Activated T-helper 2 cell treated with anti-CD3 and anti-CD28 coated beads, Interferon-gamma antibody, Interleukin-2, Interleukin-4, amounts not matched to agents 10 μg/mL and 5 μg/mL and 100 μg/mL, durations not matched to agents 14 hours and 24 hours and 36 hours (primary cell): ENCODE measurements at regions of chrX and their contacts with region 1.

Region 1: DNA sequence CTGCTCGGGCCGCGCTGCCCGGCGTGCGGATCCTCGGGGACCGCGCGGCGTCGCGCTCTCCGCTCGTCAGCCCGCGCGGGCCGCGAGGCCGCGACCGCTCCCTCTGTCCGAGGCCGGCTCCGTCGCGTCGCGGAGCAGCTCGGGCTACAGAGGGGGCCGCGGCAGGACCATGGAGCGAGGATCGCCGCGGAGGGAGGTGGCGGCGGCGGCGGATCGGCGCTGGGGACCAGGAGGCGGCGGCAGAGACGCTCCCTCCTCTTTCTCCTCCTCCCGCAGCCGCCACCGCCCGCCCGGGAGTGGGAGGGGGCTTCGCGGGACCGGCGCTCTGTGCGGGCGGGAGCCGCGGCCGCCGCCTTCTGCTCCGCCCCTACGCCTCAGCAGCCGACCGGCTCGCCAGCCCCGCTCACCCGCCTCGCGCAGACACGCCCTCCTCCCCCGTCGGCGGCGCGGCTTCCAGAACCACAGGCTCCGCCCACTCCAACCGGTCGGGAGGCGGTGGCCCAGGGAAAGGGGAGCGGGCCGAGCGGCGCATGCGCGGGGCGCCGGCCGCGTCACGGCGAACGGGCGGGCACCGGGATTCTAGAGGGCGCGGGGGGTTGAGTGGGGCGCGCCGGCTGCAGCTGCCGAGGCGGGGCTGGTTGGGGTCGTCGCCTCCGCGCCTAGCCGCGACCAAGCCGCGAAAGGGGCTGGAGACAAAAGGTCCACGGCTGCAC is at the start of gene CASK:
- DNase-seq: peak; percentile 86
- H3K4me3 Mint-ChIP-seq: peak within 1 kb of the TSS; percentile 88
- H3K27ac Mint-ChIP-seq: peak within 1 kb of the TSS; percentile 87
- H3K4me1 Mint-ChIP-seq: peaks cover 36% of the 10 kb centered on the region
- H3K27me3 Mint-ChIP-seq: no peaks in the 10 kb centered on the region
- total RNA-seq, gene CASK: 18.6 and 19.4 TPM in 2 replicates

Region 2: GRCh38 chrX:41684138-41684537 is 239.3 kb before region 1 on chrX:
- intact Hi-C with region 1: no loop called
- DNase-seq: no peak
- H3K4me3 Mint-ChIP-seq: no peak overlapping the region
- H3K27ac Mint-ChIP-seq: no peak overlapping the region
- H3K4me1 Mint-ChIP-seq: peaks cover 21% of the 10 kb centered on the region
- H3K27me3 Mint-ChIP-seq: no peaks in the 10 kb centered on the region

Region 3: DNA sequence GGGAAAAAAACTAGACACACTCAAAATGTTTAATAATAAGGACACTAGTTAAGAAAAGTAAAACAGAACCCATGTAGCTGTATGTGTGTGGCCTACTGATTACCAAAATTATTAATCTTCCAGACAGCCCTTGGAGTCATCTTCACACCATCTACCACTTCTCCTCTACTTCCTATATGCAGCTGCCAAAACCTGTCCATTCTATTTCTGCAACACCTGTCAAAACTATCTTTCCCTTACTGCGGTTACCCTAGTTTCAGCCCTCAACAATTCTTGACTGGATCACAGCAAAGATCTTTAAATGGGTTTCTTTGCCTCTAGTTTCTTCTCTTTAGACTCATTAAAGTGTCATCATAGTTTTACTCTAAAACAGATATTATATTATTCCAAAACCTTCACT is 126.8 kb before region 1 on chrX:
- intact Hi-C with region 1: loop called (anchors 5 kb)
- DNase-seq: no peak
- H3K4me3 Mint-ChIP-seq: no peak overlapping the region
- H3K27ac Mint-ChIP-seq: no peak overlapping the region
- H3K4me1 Mint-ChIP-seq: peaks cover 17% of the 10 kb centered on the region
- H3K27me3 Mint-ChIP-seq: no peaks in the 10 kb centered on the region

Region 4: GRCh38 chrX:41909068-41909467 is 14.3 kb before region 1 on chrX:
- intact Hi-C with region 1: loop called (anchors 2 kb)
- DNase-seq: no peak
- H3K4me3 Mint-ChIP-seq: no peak overlapping the region
- H3K27ac Mint-ChIP-seq: peak overlapping the region; percentile 49
- H3K4me1 Mint-ChIP-seq: peaks cover 24% of the 10 kb centered on the region
- H3K27me3 Mint-ChIP-seq: no peaks in the 10 kb centered on the region

Region 5: GRCh38 chrX:42000836-42001235 is 77.4 kb after region 1 on chrX:
- intact Hi-C with region 1: no loop called
- DNase-seq: no peak
- H3K4me3 Mint-ChIP-seq: no peak overlapping the region
- H3K27ac Mint-ChIP-seq: no peak overlapping the region
- H3K4me1 Mint-ChIP-seq: no peaks in the 10 kb centered on the region
- H3K27me3 Mint-ChIP-seq: peaks cover 5% of the 10 kb centered on the region

Region 6: DNA sequence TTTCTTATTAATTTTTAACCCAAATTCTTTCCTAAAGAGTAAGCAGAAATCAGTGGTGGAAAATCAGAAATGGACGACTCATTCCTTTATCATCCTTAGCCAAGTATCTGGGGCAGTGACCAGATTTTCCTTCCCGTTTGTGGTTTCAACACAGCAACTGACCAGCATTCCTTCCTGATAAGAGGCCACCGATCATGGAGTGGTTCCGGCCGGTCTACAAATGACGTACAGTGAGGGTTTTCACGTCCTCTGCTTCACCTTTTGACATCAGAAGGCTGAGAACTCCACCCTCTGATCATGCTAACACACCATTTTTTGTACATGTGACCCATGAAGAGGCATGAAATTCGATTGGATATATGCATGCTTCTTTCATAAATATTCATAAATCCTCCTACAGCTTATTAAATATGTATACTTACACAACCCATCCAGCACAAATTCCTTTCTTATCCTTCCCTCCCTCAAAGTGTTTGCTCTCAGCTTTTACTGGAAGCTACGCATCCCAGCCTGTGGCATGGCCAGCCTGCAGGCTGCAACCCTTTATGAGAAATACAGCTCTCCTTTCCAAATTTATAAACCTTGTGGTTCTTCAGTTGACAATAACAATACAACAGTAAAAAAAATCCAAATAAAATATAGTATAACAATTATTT is 173.0 kb after region 1 on chrX:
- intact Hi-C with region 1: loop called (anchors 5 kb)
- DNase-seq: no peak
- H3K4me3 Mint-ChIP-seq: no peak overlapping the region
- H3K27ac Mint-ChIP-seq: no peak overlapping the region
- H3K4me1 Mint-ChIP-seq: peaks cover 6% of the 10 kb centered on the region
- H3K27me3 Mint-ChIP-seq: no peaks in the 10 kb centered on the region

Region 7: GRCh38 chrX:42375086-42375485 is 451.7 kb after region 1 on chrX:
- intact Hi-C with region 1: no loop called
- DNase-seq: no peak
- H3K4me3 Mint-ChIP-seq: no peak overlapping the region
- H3K27ac Mint-ChIP-seq: no peak overlapping the region
- H3K4me1 Mint-ChIP-seq: no peaks in the 10 kb centered on the region
- H3K27me3 Mint-ChIP-seq: peaks cover 3% of the 10 kb centered on the region